Activated CD8-positive, alpha-beta T cell treated with anti-CD3 and anti-CD28 coated beads for 36 hours (primary cell): ENCODE measurements at regions of chr1 and their contacts with region 1.

Region 1: DNA sequence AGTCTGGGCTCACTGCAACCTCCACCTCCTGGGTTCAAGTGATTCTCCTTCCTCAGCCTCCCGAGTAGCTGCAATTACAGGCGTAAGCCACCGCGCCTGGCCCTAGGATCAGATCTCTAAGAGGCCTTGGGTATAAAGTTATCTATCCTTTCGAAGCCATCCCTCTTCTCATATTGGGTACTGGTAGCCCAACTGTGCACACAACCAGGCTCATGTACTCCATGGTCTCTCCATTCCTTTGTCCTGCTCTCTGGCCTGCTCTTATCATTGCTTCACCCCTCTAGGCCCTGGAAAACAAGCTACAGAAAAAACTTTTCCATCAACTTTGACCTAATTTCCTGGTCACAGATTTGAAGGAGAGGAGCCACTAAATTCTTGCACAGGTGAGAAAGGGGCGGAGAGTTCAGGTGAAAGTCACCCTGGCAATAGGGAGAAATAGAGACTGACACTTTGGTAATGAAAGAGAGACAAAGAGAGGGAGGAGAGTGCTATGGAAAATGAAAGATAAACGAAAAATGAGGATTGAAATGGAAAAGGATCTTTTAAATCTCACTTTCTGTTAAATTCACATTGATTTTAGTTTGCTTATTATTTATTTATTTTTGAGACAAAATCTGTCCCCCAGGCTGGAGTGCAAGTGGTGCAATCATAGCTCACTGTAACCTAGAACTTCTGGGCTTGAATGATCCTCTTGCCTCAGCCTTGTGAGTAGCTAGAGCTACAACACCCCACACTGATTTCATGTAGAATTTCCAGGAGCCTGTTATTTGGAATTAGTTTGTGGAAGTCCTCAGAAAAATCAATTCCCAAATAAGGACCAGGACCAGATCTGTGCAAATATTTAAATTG is 5.9 kb downstream of the TXNIP start:
- DNase-seq: peak; percentile 41
- ATAC-seq: no peak
- H3K4me3 Mint-ChIP-seq: no peak overlapping the region
- H3K27ac Mint-ChIP-seq: no peak overlapping the region
- H3K4me1 Mint-ChIP-seq: peaks cover 61% of the 10 kb centered on the region
- H3K27me3 Mint-ChIP-seq: no peaks in the 10 kb centered on the region
- CTCF ChIP-seq: no peak

Region 2: GRCh38 chr1:145942405-145942804 is 48.1 kb before region 1 on chr1:
- CTCF ChIA-PET with region 1: no interaction called
- POLR2A ChIA-PET with region 1: no interaction called
- intact Hi-C with region 1: no loop called
- DNase-seq: no peak
- ATAC-seq: no peak
- H3K4me3 Mint-ChIP-seq: no peak overlapping the region
- H3K27ac Mint-ChIP-seq: no peak overlapping the region
- H3K4me1 Mint-ChIP-seq: peaks cover 7% of the 10 kb centered on the region
- H3K27me3 Mint-ChIP-seq: no peaks in the 10 kb centered on the region
- CTCF ChIP-seq: no peak

Region 3: DNA sequence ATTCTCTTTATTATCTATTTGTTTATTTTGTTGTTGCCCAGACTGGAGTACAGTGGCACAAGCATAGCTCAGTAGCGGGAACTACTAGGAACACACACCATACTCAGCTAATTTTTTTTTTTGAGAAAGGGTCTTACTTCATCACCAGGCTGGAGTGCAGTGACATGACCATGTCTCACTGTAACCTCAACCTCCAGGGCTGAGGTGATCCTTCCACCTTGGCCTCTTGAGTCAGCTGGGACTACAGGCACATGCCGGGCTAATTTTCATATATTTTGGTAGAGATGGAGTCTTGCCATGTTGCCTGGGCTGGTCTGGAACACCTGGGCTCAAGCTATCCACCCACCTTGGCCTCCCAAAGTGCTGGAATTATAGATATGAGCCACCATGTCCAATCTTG is 11.2 kb after region 1 on chr1:
- CTCF ChIA-PET with region 1: interaction called, 24 read pairs
- POLR2A ChIA-PET with region 1: interaction called, 446 read pairs
- intact Hi-C with region 1: no loop called
- DNase-seq: no peak
- ATAC-seq: no peak
- H3K4me3 Mint-ChIP-seq: no peak overlapping the region
- H3K27ac Mint-ChIP-seq: peak overlapping the region; percentile 75
- H3K4me1 Mint-ChIP-seq: peaks cover 71% of the 10 kb centered on the region
- H3K27me3 Mint-ChIP-seq: no peaks in the 10 kb centered on the region
- CTCF ChIP-seq: no peak

Region 4: DNA sequence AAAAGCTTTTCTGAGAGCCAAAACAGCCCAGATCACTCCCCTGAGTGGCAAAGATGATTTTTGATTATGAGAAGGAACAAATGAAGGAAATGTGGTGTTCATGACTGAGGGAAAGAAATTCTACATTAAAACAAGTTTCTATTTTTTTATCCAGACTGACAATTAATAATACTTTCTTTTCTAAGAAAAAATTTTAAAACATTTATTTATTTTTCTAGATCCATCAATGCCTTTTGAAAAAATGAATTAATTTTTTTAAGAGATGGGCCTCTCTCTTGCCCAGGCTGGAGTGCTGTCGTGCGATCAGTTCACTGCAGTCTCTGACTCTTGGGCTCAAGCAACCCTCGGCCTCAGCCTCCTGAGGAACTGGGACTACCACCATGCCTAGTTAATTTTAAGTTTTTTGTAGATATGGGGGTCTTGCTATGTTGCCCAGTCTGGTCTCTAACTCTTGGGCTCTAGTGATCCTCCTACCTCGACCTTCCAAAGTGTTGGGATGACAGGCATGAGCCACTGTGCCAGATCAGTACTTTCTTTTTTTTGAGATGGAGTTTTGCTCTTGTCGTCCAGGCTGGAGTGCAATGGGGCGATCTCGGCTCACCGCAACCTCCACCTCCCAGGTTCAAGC is 17.1 kb after region 1 on chr1:
- CTCF ChIA-PET with region 1: interaction called, 24 read pairs
- POLR2A ChIA-PET with region 1: interaction called, 54 read pairs
- intact Hi-C with region 1: no loop called
- DNase-seq: no peak
- ATAC-seq: no peak
- H3K4me3 Mint-ChIP-seq: peak overlapping the region; percentile 50
- H3K27ac Mint-ChIP-seq: peak overlapping the region; percentile 87
- H3K4me1 Mint-ChIP-seq: peaks cover 41% of the 10 kb centered on the region
- H3K27me3 Mint-ChIP-seq: no peaks in the 10 kb centered on the region
- CTCF ChIP-seq: no peak